ENCODE measurements at regions of chr1 and their contacts with region 1.

Region 1: GRCh38 chr1:67760030-67760821 is 73.0 kb downstream of the GNG12 start:
- DNase-seq: peak; percentile 53
- ATAC-seq: peak; percentile 72 to 78

Region 2: DNA sequence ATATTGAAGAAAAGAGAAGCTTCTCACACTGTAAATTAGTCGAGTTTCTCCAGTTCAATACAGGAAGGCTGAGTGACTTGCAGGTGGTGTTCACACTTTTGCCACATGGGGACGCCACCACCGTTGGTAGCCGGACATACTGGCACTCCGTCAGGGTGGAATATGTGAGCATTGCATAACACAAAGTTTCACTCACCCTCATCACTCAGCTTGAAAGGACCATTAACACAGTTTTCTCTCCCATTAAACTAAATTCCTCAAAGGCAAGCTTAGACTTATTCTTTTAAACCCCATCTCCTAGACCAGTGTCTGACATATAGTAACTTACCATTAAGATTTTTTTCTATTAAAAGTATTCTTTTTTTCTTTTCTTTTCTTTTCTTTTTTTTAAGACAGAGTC is 224.8 kb before region 1 on chr1:
- intact Hi-C with region 1: loop called (anchors 1 to 10 kb)
- DNase-seq: peak; percentile 80
- ATAC-seq: peak; percentile 74 to 81

Region 3: DNA sequence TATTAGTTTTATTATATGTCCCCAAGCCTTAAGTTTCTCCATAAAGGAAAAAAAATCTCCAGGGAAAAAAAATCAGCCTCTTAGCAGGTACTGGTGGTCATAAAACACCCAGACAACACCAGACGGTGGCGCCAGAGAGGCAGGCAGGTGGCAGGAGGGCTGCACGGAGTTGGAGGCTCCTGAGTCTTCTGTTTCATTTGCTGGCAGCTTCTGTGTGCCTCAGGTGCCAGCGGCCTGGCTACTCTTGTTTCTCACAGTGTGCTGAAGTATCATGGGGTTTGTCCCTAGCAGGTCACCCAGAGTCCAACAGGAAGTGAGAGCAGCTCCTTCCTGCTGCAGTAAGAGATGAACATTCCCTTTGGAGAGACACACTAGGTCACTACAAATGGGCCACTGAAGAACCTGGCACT is 198.5 kb before region 1 on chr1:
- intact Hi-C with region 1: loop called (anchors 1 to 5 kb)
- DNase-seq: peak; percentile 91
- ATAC-seq: peak; percentile 69 to 77

Region 4: DNA sequence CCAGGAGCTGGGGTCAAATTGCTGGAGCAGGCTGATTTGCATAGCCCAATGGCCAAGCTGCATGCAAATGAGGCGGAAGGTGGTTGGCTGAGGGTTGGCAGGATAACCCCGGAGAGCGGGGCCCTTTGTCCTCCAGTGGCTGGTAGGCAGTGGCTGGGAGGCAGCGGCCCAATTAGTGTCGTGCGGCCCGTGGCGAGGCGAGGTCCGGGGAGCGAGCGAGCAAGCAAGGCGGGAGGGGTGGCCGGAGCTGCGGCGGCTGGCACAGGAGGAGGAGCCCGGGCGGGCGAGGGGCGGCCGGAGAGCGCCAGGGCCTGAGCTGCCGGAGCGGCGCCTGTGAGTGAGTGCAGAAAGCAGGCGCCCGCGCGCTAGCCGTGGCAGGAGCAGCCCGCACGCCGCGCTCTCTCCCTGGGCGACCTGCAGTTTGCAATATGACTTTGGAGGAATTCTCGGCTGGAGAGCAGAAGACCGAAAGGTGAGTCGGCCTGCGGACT is 75.1 kb before region 1 on chr1 and contains the start of gene GADD45A:
- intact Hi-C with region 1: loop called in 1 of 2 experiments (anchors 5 kb)
- DNase-seq: peak; percentile 99
- ATAC-seq: peak; percentile 91 to 93
- total RNA-seq, gene GADD45A: 14.0 to 15.8 TPM

Region 5: DNA sequence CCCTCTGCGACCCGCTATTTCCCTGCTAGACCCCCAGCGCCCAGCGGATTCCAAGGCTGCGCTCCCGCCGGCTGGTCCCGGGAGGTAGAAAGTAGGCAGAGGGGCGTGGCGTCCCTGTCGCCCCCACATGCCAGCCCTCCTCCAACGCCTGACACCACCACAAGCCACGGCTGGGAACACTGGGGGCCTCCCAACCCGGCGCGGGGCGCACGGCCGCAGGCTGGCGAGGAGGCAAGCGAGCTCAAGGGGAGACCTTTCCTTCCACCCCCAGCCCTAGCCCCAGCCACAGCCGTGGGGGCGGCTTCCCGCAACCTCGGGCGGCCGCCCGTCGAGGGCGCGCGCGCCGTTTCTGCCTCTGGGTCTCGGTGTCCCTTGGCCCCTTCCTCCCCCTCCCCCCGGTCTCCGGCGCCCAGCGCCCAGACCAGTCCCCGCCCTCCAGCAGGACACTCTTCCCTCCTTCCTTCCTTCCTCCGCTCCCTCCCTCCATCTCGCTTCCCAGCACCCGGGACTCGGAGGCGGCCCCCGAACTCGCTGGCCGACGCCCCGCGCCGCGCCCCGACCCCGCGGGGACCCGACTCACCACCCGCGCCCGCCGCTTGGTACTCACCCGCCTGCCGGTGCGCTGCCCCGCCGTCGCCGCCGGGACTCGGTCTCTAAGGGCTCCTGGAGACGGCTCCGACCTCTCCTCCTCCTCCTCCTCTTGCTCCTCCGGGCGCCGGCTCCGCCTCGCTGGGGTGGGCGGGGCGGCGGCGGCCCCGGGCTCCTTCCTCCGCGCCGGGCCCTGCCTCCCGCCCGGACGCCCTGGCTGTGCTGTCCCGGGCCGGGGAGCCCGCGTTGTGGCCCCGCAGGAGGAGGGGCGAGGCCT is 72.7 kb after region 1 on chr1 and contains the start of gene GNG12:
- intact Hi-C with region 1: loop called (anchors 5 to 10 kb)
- DNase-seq: peak; percentile 79
- ATAC-seq: peak; percentile 92 to 95
- total RNA-seq, gene GNG12: 34.1 to 49.6 TPM

Measured in left cardiac atrium (tissue), 4 donors.